ENCODE measurements at regions of chr3 and their contacts with region 1.

Region 1: DNA sequence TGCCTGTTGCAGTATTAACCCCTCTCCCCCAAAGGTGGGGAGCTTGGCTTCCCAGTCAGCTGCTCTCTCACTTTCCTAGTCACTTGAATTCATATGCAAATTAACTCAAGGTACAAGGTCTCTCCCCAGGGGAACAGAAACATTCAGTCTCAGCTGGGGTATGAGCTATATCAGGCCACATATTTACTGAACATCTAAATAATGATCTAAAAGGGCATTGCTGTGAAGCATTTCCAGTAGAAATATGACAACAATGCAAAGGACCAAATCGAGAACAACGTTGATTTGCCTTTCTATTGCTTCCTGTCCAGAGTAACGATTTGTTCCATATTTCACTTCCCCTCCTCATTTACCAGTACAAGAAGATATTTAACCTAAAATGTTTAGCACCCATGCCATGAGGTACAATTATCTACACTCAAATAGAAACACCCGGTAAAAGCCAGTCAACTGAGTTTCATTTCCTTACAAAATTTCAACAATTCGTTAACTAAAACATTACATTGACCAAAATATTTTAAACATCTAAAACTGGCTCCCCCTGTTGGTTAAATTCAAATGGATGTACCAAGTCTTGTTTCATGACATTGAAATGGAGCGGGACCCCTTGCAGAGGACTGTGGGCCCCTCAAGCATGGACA is 36.5 kb upstream of the KLHL6 start:
- DNase-seq: peak in 3 of 14 experiments; percentile 57 to 60 (median 59)
- ATAC-seq: no peak
- H3K4me3 ChIP-seq: peak overlapping the region; percentile 2
- H3K4me3 Mint-ChIP-seq: peak overlapping the region; percentile 81
- H3K27ac ChIP-seq: no peak overlapping the region
- H3K27ac Mint-ChIP-seq: peak overlapping the region; percentile 62
- H3K4me1 ChIP-seq: peaks cover 32% of the 10 kb centered on the region
- H3K4me1 Mint-ChIP-seq: peaks cover 44% of the 10 kb centered on the region
- H3K27me3 ChIP-seq: no peaks in the 10 kb centered on the region
- H3K27me3 Mint-ChIP-seq: no peaks in the 10 kb centered on the region
- CTCF ChIP-seq: peak; percentile 48

Region 2: GRCh38 chr3:183468424-183468823 is 123.6 kb before region 1 on chr3:
- CTCF ChIA-PET with region 1: interaction called, 3 read pairs
- POLR2A ChIA-PET with region 1: no interaction called
- intact Hi-C with region 1: loop called (anchors 1 kb)
- DNase-seq: no peak
- ATAC-seq: no peak
- H3K4me3 ChIP-seq: no peak overlapping the region
- H3K4me3 Mint-ChIP-seq: no peak overlapping the region
- H3K27ac ChIP-seq: no peak overlapping the region
- H3K27ac Mint-ChIP-seq: no peak overlapping the region
- H3K4me1 ChIP-seq: peaks cover 7% of the 10 kb centered on the region
- H3K4me1 Mint-ChIP-seq: peaks cover 5% of the 10 kb centered on the region
- H3K27me3 ChIP-seq: no peaks in the 10 kb centered on the region
- H3K27me3 Mint-ChIP-seq: no peaks in the 10 kb centered on the region
- CTCF ChIP-seq: no peak

Region 3: DNA sequence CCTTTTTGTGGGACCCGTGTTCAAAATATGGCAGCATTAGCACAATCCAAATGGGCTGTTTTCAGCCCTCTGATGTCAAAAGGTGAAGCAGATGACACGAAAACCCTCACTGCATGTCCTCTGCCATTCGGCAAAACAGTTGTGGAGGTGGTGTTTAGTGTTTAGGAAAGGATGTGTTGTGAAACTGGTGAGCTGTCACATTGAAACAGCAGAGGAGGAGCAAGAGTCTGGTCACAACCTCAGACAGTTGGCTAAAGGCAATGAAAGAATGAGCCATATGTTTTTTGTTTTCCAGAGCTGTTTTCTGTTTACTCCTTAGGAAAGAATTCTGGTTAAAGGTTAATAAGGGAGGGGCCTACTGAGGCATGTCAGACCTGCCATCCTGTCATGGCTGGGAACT is 1360.7 kb after region 1 on chr3:
- CTCF ChIA-PET with region 1: no interaction called
- POLR2A ChIA-PET with region 1: no interaction called
- intact Hi-C with region 1: no loop called
- DNase-seq: no peak
- ATAC-seq: no peak
- H3K4me3 ChIP-seq: no peak overlapping the region
- H3K4me3 Mint-ChIP-seq: no peak overlapping the region
- H3K27ac ChIP-seq: no peak overlapping the region
- H3K27ac Mint-ChIP-seq: no peak overlapping the region
- H3K4me1 ChIP-seq: no peaks in the 10 kb centered on the region
- H3K4me1 Mint-ChIP-seq: no peaks in the 10 kb centered on the region
- H3K27me3 ChIP-seq: no peaks in the 10 kb centered on the region
- H3K27me3 Mint-ChIP-seq: no peaks in the 10 kb centered on the region
- CTCF ChIP-seq: no peak

Measured in CD4-positive, alpha-beta T cell (primary cell).